Kidney (tissue), 22 donors: ENCODE measurements at regions of chr9 and their contacts with region 1.

Region 1: GRCh38 chr9:114405294-114406034 is 17.7 kb upstream of the AKNA start:
- DNase-seq: peak in 4 of 5 donors; percentile 80 to 93 (median 84)
- H3K4me3 ChIP-seq: no peak overlapping the region
- H3K27ac ChIP-seq: no peak overlapping the region
- H3K4me1 ChIP-seq: no peaks in the 10 kb centered on the region
- H3K27me3 ChIP-seq: no peaks in the 10 kb centered on the region
- CTCF ChIP-seq: peak; percentile 82

Region 2: DNA sequence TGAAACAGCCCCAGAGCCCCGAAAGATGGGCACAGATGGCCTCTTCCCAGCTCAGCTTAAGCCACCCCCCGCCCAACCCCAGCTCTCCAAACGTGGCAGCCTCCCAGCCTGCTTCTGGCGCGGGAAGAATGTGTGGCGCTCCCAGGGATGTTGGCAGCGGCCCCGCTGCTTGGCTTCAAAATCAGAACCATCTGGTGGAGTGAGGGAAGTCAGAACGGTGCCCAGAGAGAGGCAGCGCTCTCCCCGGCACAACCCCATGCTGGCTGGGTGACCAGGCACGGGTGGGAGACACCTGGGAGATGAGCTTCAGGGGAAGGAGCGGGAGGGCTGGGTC is 155.3 kb before region 1 on chr9:
- intact Hi-C with region 1: no loop called
- DNase-seq: peak in 1 of 5 donors; percentile 26
- H3K4me3 ChIP-seq: no peak overlapping the region
- H3K27ac ChIP-seq: no peak overlapping the region
- H3K4me1 ChIP-seq: no peaks in the 10 kb centered on the region
- H3K27me3 ChIP-seq: no peaks in the 10 kb centered on the region
- CTCF ChIP-seq: no peak

Region 3: DNA sequence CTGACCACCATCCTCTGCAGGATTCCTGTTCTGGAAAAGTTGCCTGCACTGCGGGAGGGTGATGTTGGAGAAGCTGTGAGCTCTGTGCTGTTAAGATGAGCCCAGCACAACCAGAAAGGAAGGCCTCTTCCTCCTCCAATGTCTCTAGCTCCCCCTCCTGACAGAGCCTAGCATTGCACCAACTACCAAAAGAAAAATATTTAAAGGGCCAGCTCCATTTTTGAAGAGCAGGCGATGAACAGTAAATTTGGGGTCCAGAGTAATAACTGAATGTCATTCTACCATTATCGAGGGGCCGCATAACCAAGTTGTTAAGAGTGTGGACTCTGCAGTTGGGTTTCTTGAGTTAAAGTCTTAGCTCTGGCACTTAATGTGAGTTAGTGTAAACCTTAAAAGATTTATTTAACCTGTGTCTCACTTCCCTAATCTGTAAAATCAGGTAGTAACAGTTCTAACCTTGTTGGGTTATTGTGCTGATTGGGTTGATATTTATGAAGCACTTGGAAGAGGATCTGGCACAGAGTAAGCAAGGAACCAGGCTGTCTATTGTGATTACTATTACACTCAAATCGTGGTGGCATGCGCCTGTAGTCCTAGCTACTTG is 248.2 kb after region 1 on chr9:
- intact Hi-C with region 1: loop called (anchors 5 kb)
- DNase-seq: peak in 4 of 5 donors; percentile 79 to 88 (median 84)
- H3K4me3 ChIP-seq: no peak overlapping the region
- H3K27ac ChIP-seq: no peak overlapping the region
- H3K4me1 ChIP-seq: no peaks in the 10 kb centered on the region
- H3K27me3 ChIP-seq: no peaks in the 10 kb centered on the region
- CTCF ChIP-seq: peak; percentile 90

Region 4: GRCh38 chr9:115013998-115014397 is 608.5 kb after region 1 on chr9:
- intact Hi-C with region 1: loop called (anchors 10 kb)
- DNase-seq: peak; percentile 68 to 87 (median 70)
- H3K4me3 ChIP-seq: no peak overlapping the region
- H3K27ac ChIP-seq: no peak overlapping the region
- H3K4me1 ChIP-seq: no peaks in the 10 kb centered on the region
- H3K27me3 ChIP-seq: no peaks in the 10 kb centered on the region
- CTCF ChIP-seq: peak; percentile 82